Activated naive CD4-positive, alpha-beta T cell treated with anti-CD3 and anti-CD28 coated beads for 36 hours (primary cell): ENCODE measurements at regions of chr11 and their contacts with region 1.

Region 1: DNA sequence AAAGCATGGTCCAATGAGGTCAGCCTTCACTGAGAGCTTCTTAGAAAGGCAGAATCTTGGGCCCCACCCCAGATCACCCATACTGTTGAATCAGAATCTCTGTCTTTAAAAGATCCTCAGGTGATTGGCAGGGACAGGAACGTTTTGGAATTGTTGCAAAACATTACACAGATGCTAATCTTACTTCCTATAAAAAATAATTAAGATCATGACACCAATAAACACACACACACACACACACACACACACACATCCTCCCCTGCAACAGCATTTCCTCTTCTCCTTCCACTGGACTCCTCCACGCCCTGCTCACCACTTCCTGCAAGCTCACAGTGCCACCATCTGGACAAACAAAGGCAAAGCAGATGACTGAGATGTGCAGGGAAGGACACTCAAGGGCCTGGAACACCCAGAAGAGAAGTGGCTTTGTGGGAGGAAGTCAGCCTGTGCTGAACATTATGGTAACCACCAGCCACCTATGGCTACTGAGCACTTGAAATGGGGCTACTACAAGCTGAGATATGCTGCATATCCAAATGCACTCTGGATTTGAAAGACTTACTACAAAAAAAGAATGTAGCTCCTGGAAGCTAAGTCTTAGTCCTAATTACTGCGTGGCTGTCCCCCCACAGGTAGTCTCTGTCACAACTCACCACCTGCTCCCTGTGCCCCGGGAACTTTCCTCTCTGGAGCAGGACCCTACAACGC is 65.6 kb downstream of the BTG4 start:
- DNase-seq: peak; percentile 87
- H3K4me3 Mint-ChIP-seq: no peak overlapping the region
- H3K27ac Mint-ChIP-seq: no peak overlapping the region
- H3K4me1 Mint-ChIP-seq: peaks cover 16% of the 10 kb centered on the region
- H3K27me3 Mint-ChIP-seq: no peaks in the 10 kb centered on the region

Region 2: DNA sequence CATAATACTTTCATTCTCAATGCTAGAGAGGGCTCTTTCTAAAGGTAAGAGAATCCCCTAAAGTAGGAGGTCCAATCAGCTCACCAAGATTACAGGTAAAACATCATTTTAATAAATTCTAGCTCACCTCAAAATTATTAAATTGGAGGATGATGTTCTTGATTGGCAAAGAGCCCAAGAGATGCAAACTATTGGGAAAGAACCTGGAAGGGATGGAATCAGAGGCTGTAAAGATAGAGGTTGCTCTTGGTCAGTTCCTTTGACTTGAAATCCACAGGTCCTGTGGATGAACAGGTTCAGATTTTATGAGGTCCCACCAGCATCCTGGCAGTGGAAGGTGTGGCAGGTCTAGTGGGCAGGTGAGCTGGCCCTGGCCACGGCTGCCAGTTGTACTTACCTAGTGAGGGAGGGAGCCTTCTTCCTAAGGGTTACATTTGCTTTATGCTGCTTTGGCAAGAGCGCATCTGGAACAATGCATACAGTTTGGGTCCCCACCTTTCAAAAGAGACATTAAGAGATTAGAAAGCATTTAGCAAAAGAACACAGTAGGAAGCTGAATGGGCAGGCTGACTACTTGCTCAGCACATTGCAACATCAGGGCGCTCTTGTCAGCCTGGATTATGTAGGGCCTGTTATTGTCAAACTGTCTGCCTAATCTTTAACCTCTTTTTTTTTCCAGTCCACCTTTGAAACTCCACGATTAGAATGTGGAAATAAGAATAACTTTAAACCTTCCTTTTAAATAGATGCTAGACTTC is 1247.2 kb before region 1 on chr11:
- CTCF ChIA-PET with region 1: no interaction called
- intact Hi-C with region 1: loop called (anchors 10 kb)
- DNase-seq: no peak
- H3K4me3 Mint-ChIP-seq: no peak overlapping the region
- H3K27ac Mint-ChIP-seq: no peak overlapping the region
- H3K4me1 Mint-ChIP-seq: no peaks in the 10 kb centered on the region
- H3K27me3 Mint-ChIP-seq: no peaks in the 10 kb centered on the region

Region 3: GRCh38 chr11:111429066-111429506 is 17.5 kb before region 1 on chr11:
- CTCF ChIA-PET with region 1: interaction called, 49 read pairs
- intact Hi-C with region 1: loop called (anchors 2 kb)
- DNase-seq: peak; percentile 88
- H3K4me3 Mint-ChIP-seq: no peak overlapping the region
- H3K27ac Mint-ChIP-seq: no peak overlapping the region
- H3K4me1 Mint-ChIP-seq: no peaks in the 10 kb centered on the region
- H3K27me3 Mint-ChIP-seq: no peaks in the 10 kb centered on the region

Region 4: GRCh38 chr11:111435046-111435698 is 11.4 kb before region 1 on chr11:
- CTCF ChIA-PET with region 1: interaction called, 49 read pairs
- intact Hi-C with region 1: loop called (anchors 1 kb)
- DNase-seq: no peak
- H3K4me3 Mint-ChIP-seq: no peak overlapping the region
- H3K27ac Mint-ChIP-seq: no peak overlapping the region
- H3K4me1 Mint-ChIP-seq: peaks cover 7% of the 10 kb centered on the region
- H3K27me3 Mint-ChIP-seq: peaks cover 1% of the 10 kb centered on the region

Region 5: DNA sequence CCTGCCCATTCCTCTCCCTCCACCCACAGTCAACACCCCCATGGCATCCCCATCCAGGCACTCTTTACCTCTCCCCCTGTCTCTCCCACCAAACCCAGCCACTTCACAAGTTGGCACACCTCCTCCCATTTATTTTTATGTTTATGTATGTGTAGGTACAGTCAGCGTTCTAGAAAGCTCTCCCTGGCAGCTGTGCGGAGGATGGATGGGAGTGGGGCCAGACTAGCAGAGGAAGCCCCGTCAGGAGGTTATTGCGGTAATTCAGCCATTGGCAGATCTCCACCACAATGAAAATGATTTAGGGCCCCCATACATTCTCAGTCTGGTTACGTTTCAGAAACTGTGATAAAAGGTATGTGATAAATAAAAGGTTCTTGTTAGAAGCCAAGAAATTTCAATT is 14.3 kb after region 1 on chr11:
- CTCF ChIA-PET with region 1: interaction called, 13 read pairs
- intact Hi-C with region 1: no loop called
- DNase-seq: no peak
- H3K4me3 Mint-ChIP-seq: no peak overlapping the region
- H3K27ac Mint-ChIP-seq: no peak overlapping the region
- H3K4me1 Mint-ChIP-seq: no peaks in the 10 kb centered on the region
- H3K27me3 Mint-ChIP-seq: peaks cover 14% of the 10 kb centered on the region

Region 6: DNA sequence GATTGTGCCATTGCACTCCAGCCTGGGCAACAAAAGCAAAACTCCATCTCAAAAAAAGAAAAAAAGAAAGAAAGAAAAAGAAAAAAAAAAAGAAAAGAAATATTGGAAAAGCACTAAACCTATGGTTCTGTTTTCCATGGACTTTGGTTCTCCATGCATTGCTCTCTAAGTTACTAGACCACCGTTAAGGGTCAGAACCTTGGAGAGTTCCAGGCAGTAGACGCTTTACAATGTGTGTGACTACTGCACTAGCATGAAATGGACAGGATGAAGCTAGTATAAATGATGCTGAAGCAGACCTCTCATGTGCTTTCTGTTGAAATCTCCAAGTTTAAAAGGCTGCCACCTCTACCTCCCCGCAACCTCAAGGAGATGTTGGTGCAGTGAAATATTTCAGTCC is 219.2 kb after region 1 on chr11:
- CTCF ChIA-PET with region 1: no interaction called
- intact Hi-C with region 1: no loop called
- DNase-seq: peak; percentile 11
- H3K4me3 Mint-ChIP-seq: no peak overlapping the region
- H3K27ac Mint-ChIP-seq: no peak overlapping the region
- H3K4me1 Mint-ChIP-seq: peaks cover 4% of the 10 kb centered on the region
- H3K27me3 Mint-ChIP-seq: no peaks in the 10 kb centered on the region